ENCODE measurements at regions of chr12 and their contacts with region 1.

Region 1: DNA sequence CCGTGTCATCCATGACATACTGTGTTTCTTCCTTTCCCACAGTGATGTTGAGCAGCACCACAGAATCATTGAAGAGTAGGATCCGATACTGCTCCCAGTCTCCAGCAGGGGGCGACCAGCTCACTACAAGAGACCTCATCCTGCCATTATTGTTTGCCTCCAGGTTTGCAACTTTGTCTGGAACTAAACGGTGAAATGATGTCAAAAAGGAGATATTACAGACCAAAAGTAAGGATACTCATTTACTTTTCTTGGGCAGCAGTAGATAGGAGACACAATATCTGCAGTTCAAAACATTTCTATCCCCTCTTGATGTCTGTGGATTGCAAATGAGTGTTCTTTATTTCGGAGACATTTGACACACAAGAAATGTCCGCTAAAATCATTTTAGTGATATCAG is 47.2 kb downstream of the PTPRB start:
- DNase-seq: peak; percentile 36
- ATAC-seq: peak; percentile 87
- H3K4me3 ChIP-seq: no peak overlapping the region
- H3K27ac ChIP-seq: no peak overlapping the region
- H3K4me1 ChIP-seq: no peaks in the 10 kb centered on the region
- H3K27me3 ChIP-seq: peaks cover 3% of the 10 kb centered on the region; the same call in 1 of the 2 replicates
- CTCF ChIP-seq: peak; percentile 87

Region 2: DNA sequence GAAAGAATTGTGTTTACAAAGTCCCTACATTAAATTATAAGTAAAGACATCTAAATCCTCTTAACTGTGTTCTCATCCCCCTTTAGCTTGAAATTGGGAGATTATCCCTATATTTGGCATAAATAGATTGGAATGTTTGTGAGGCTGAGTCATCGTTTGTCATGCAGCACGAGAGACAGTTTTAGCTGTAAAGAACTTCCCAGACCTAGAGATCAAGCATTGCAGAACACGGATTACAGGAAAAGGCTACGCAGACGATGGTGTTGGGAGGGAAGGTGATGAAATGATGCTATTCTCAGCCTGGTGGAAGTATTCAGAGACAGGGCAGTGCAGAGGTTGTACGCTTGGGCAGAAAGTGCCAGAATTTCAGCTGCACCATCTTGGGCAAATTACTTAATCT is 46.6 kb before region 1 on chr12:
- CTCF ChIA-PET with region 1: no interaction called
- POLR2A ChIA-PET with region 1: no interaction called
- in situ Hi-C with region 1: no loop called
- intact Hi-C with region 1: no loop called
- DNase-seq: peak; percentile 28
- ATAC-seq: no peak
- H3K4me3 ChIP-seq: no peak overlapping the region
- H3K27ac ChIP-seq: no peak overlapping the region
- H3K4me1 ChIP-seq: no peaks in the 10 kb centered on the region
- H3K27me3 ChIP-seq: no peaks in the 10 kb centered on the region
- CTCF ChIP-seq: no peak

Region 3: DNA sequence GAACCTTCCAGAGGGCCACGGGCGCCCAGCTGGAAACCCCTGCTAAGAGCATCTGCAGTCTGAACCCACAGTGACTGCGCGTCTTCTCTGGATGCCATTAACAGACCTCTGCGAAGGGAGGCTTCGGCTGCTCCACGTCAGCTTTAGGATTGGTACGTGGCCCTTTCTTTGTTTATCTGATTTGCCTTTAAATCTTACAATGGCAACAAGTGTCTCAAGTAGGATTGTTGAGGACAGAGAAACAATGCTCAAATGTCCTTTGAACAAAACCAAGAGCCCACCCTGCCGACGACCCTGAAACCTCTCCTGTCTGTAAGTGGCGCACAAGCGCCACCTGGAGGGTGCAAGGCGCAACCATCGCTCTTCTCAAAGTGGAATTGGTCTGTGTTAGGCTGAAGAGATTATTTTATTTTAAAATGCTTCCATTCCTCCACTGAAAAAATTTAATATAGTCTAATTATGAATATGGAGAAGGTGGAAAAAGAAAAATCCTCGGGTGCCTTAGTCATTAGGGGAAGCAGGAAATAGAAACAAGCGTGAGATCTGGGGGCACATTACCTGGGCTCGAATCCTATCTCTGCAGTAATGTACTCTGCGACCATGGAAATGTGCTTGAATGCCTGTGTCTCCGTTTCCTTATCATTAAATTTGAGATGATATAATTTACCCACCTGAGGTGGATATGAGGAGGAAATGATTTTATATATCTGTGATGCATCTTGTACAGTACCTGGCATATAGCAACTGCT is 129.8 kb after region 1 on chr12:
- CTCF ChIA-PET with region 1: no interaction called
- POLR2A ChIA-PET with region 1: no interaction called
- in situ Hi-C with region 1: no loop called
- intact Hi-C with region 1: loop called (anchors 2 kb)
- DNase-seq: peak; percentile 20
- ATAC-seq: peak; percentile 71; the same call in 1 of the 2 replicates
- H3K4me3 ChIP-seq: peak overlapping the region in 1 of 2 experiments; percentile 19; a peak in 1 of 4 replicates
- H3K27ac ChIP-seq: no peak overlapping the region
- H3K4me1 ChIP-seq: no peaks in the 10 kb centered on the region; the same call in 1 of the 2 replicates
- H3K27me3 ChIP-seq: peaks cover 8% of the 10 kb centered on the region
- CTCF ChIP-seq: peak; percentile 91

Region 4: GRCh38 chr12:71014180-71014785 is 424.2 kb after region 1 on chr12:
- CTCF ChIA-PET with region 1: no interaction called
- POLR2A ChIA-PET with region 1: no interaction called
- in situ Hi-C with region 1: no loop called
- intact Hi-C with region 1: loop called (anchors 5 kb)
- DNase-seq: no peak
- ATAC-seq: no peak
- H3K4me3 ChIP-seq: no peak overlapping the region
- H3K27ac ChIP-seq: no peak overlapping the region
- H3K4me1 ChIP-seq: no peaks in the 10 kb centered on the region
- H3K27me3 ChIP-seq: no peaks in the 10 kb centered on the region
- CTCF ChIP-seq: peak; percentile 45; the same call in 1 of the 2 replicates